Naive thymus-derived CD4-positive, alpha-beta T cell (primary cell): ENCODE measurements at regions of chr17 and their contacts with region 1.

Region 1: GRCh38 chr17:80529104-80529903 is 15.3 kb upstream of the RPTOR start:
- DNase-seq: no peak
- ATAC-seq: no peak
- H3K4me3 ChIP-seq: no peak overlapping the region
- H3K4me3 Mint-ChIP-seq: no peak overlapping the region
- H3K27ac ChIP-seq: no peak overlapping the region
- H3K27ac Mint-ChIP-seq: no peak overlapping the region
- H3K4me1 ChIP-seq: no peaks in the 10 kb centered on the region
- H3K4me1 Mint-ChIP-seq: no peaks in the 10 kb centered on the region
- H3K27me3 ChIP-seq: no peaks in the 10 kb centered on the region
- H3K27me3 Mint-ChIP-seq: peaks cover 11 to 29% (median 16%) of the 10 kb centered on the region in 5 donors

Region 2: GRCh38 chr17:80477647-80478478 is 51.4 kb before region 1 on chr17:
- CTCF ChIA-PET with region 1: no interaction called
- POLR2A ChIA-PET with region 1: no interaction called
- intact Hi-C with region 1: loop called in 1 of 2 experiments (anchors 5 kb)
- DNase-seq: peak in 6 of 9 donors; percentile 29 to 58 (median 42)
- ATAC-seq: peak; percentile 31
- H3K4me3 ChIP-seq: no peak overlapping the region
- H3K4me3 Mint-ChIP-seq: peak overlapping the region in 1 of 10 donors; percentile 76
- H3K27ac ChIP-seq: no peak overlapping the region
- H3K27ac Mint-ChIP-seq: no peak overlapping the region
- H3K4me1 ChIP-seq: peaks cover 8 to 15% of the 10 kb centered on the region in 2 donors
- H3K4me1 Mint-ChIP-seq: peaks cover 8 to 24% (median 21%) of the 10 kb centered on the region in 7 donors
- H3K27me3 ChIP-seq: peaks cover 0 to 20% of the 10 kb centered on the region in 2 donors
- H3K27me3 Mint-ChIP-seq: peaks cover 46 to 58% (median 53%) of the 10 kb centered on the region in 5 donors

Region 3: GRCh38 chr17:80663781-80664206 is 134.5 kb after region 1 on chr17:
- CTCF ChIA-PET with region 1: no interaction called
- POLR2A ChIA-PET with region 1: no interaction called
- intact Hi-C with region 1: no loop called
- DNase-seq: peak in 8 of 9 donors; percentile 48 to 79 (median 60)
- ATAC-seq: peak; percentile 63
- H3K4me3 ChIP-seq: peak overlapping the region; percentile 40
- H3K4me3 Mint-ChIP-seq: peak overlapping the region; percentile 69 to 95 (median 82)
- H3K27ac ChIP-seq: peak overlapping the region; percentile 94
- H3K27ac Mint-ChIP-seq: peak overlapping the region; percentile 91 to 100 (median 96)
- H3K4me1 ChIP-seq: peaks cover 36 to 58% of the 10 kb centered on the region in 2 donors
- H3K4me1 Mint-ChIP-seq: peaks cover 52 to 88% (median 79%) of the 10 kb centered on the region in 7 donors
- H3K27me3 ChIP-seq: no peaks in the 10 kb centered on the region
- H3K27me3 Mint-ChIP-seq: no peaks in the 10 kb centered on the region

Region 4: DNA sequence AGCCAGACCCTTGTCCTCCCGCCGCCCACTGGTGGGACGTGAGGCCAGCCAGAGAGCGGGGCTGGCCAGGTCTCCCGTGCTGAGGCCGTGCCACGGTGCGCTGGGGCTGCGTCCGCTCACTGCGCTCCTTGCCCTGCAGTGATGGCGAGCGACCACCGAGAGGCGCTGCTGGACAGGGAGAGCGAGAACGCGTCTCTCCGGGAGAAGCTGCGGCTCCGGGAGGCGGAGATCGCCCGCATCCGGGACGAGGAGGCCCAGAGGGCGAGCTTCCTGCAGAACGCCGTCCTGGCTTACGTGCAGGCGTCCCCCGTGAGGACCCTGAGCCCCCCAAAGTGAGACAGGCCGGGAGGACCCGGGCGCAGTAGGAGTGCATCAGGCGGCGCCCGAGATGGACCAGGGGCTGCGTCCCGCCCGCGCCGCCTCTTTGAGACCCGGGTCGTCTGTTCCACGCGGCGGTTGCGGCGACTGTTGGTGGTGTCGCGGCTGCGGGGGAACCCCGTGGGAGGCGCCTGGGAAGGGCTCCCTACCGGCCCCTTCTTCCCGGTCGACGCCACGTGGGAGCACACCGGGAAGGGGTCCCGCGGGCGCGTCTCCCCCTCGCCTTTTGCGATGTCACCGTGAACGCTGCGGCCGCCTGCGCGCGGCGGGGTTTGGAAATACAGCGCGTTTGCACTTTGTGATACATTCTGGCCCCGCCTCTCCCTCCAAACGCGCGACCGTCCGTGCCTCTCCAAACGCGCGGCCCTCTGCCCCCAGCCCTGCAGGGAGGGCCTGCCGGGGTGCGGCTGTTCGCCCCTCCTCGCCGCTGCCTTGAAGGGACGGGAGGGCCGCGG is 1501.4 kb after region 1 on chr17:
- CTCF ChIA-PET with region 1: no interaction called
- POLR2A ChIA-PET with region 1: no interaction called
- intact Hi-C with region 1: no loop called
- DNase-seq: peak; percentile 73 to 92 (median 86)
- ATAC-seq: peak; percentile 94
- H3K4me3 ChIP-seq: peak overlapping the region; percentile 60
- H3K4me3 Mint-ChIP-seq: peak overlapping the region; percentile 77 to 91 (median 86)
- H3K27ac ChIP-seq: peak overlapping the region; percentile 48
- H3K27ac Mint-ChIP-seq: peak overlapping the region in 6 of 9 donors; percentile 36 to 85 (median 65)
- H3K4me1 ChIP-seq: peaks cover 7 to 12% of the 10 kb centered on the region in 2 donors
- H3K4me1 Mint-ChIP-seq: peaks cover 10 to 16% (median 16%) of the 10 kb centered on the region in 7 donors
- H3K27me3 ChIP-seq: no peaks in the 10 kb centered on the region
- H3K27me3 Mint-ChIP-seq: no peaks in the 10 kb centered on the region